SK-N-SH (cell line): ENCODE measurements at regions of chr15 and their contacts with region 1.

Region 1: GRCh38 chr15:42084460-42085235 is 9.7 kb downstream of the PLA2G4D start:
- DNase-seq: peak; percentile 89
- H3K4me3 ChIP-seq: peak overlapping the region in 1 of 2 experiments; percentile 49; a peak in 1 of 4 replicates
- H3K27ac ChIP-seq: no peak overlapping the region
- H3K4me1 ChIP-seq: peaks cover 0 to 2% of the 10 kb centered on the region in 2 experiments; a peak in 1 of 4 replicates
- H3K27me3 ChIP-seq: peaks cover 4% of the 10 kb centered on the region; the same call in 1 of the 2 replicates
- CTCF ChIP-seq: peak; percentile 88
- EP300 ChIP-seq: no peak
- RAD21 ChIP-seq: peak; percentile 78

Region 2: DNA sequence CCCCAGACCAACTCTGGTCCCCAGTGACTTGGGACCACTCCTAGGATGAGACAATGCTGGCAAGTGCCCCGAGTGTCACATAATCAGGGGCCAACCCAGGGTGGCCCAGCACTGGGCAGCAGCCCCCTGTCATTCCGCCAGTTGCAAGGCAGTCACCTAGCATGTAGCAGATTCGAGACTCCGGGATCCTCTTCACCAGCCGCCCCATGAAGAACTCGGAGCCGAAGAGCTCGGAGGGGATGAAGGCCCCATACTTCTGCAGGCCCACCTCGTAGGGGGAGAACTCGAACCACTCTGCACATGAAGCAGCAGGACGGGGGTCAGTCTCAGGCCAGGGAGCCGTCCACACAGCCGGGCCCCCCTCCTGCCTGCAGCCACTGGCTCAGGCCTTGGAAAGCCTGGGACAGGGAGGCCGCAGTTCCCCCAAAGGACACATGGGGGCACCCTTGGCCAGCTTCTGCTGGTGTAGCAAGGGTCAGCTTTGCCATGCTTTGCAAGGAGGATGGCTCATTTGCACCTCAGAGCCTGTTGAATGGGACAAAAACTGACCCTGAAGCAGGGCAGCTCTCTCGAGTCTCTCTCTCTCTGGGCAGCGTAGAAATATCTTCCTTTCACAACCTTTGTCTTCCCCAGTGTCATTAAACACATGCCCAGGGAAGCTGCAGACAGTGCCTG is 95.3 kb before region 1 on chr15:
- CTCF ChIA-PET with region 1: interaction called, 172 read pairs
- POLR2A ChIA-PET with region 1: no interaction called
- DNase-seq: peak; percentile 92
- H3K4me3 ChIP-seq: peak overlapping the region in 1 of 2 experiments; percentile 26; a peak in 1 of 4 replicates
- H3K27ac ChIP-seq: no peak overlapping the region
- H3K4me1 ChIP-seq: no peaks in the 10 kb centered on the region; a peak in 1 of 4 replicates
- H3K27me3 ChIP-seq: no peaks in the 10 kb centered on the region
- CTCF ChIP-seq: peak; percentile 92
- EP300 ChIP-seq: no peak
- RAD21 ChIP-seq: peak; percentile 98

Region 3: GRCh38 chr15:42056934-42057779 is 27.5 kb before region 1 on chr15:
- CTCF ChIA-PET with region 1: interaction called, 293 read pairs
- POLR2A ChIA-PET with region 1: no interaction called
- DNase-seq: peak; percentile 90
- H3K4me3 ChIP-seq: peak overlapping the region; percentile 30 to 47
- H3K27ac ChIP-seq: no peak overlapping the region
- H3K4me1 ChIP-seq: peaks cover 0 to 8% of the 10 kb centered on the region in 2 experiments; a peak in 2 of 4 replicates
- H3K27me3 ChIP-seq: peaks cover 11% of the 10 kb centered on the region; the same call in 1 of the 2 replicates
- CTCF ChIP-seq: peak; percentile 63
- EP300 ChIP-seq: no peak
- RAD21 ChIP-seq: peak; percentile 72

Region 4: DNA sequence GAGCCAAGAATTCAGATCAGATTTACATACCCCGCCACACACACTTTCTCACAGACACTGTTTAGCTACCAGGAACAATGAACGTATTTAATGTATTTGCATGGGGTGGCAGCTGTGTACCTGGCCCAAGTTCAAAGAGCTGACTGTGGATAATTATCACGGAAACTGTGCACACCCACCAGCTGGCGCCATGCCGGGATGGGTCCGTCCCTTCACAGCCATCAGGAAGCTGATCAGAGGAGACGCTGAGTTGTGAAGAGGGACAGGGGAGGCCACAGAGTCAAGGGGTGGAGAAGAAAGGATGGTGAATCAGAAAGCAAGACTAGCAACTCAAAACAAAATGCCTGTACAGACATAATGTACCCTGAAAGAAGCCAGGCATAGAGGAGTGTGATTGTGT is 22.8 kb after region 1 on chr15:
- CTCF ChIA-PET with region 1: interaction called, 16 read pairs
- POLR2A ChIA-PET with region 1: no interaction called
- DNase-seq: no peak
- H3K4me3 ChIP-seq: no peak overlapping the region
- H3K27ac ChIP-seq: no peak overlapping the region
- H3K4me1 ChIP-seq: peaks cover 0 to 4% of the 10 kb centered on the region in 2 experiments; a peak in 1 of 4 replicates
- H3K27me3 ChIP-seq: no peaks in the 10 kb centered on the region; the same call in 1 of the 2 replicates
- CTCF ChIP-seq: no peak
- EP300 ChIP-seq: no peak
- RAD21 ChIP-seq: no peak

Region 5: DNA sequence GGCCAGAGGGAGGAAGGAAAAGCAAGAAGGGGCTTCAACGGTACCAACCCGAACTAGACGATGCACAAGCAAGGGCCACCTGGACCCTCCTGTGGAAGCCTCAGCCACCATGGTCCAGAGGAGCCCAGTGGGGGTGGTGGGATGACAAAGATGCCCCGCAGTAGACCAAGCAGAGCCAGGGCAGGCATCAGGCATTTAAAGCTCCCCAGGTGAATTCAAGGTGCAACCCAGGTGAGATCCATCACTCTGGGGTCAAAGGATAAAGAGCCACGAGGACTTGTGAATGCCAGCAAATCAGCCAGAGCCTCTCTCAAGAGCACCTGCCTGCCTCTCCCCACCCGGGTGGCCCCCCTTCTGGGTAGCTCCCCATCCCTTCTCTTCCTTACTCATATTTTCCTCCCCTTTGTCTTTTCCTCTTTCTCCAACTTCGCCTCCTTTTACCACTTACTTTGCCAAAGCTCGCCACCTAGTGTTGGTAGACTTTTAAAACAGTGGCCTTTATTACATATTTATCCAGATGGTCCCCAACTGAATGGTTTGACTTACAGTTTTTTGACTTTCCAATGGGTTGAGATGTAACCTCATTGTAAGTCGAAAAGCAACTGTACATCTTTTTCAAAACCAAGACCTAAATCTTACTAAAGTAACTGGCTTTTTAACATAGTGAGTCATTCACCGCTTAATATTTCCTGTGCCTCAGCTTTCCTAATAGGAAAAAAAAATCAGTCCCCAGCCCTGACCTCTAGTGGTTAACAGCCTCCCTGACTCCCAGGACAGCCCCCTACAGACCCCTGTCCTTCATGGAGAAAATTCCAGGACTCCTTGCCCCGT is 53.0 kb after region 1 on chr15:
- CTCF ChIA-PET with region 1: interaction called, 16 read pairs
- POLR2A ChIA-PET with region 1: no interaction called
- DNase-seq: peak; percentile 64
- H3K4me3 ChIP-seq: peak overlapping the region in 1 of 2 experiments; percentile 27; a peak in 1 of 4 replicates
- H3K27ac ChIP-seq: no peak overlapping the region
- H3K4me1 ChIP-seq: no peaks in the 10 kb centered on the region
- H3K27me3 ChIP-seq: no peaks in the 10 kb centered on the region; the same call in 1 of the 2 replicates
- CTCF ChIP-seq: peak; percentile 76
- EP300 ChIP-seq: no peak
- RAD21 ChIP-seq: peak; percentile 78

Region 6: GRCh38 chr15:42157981-42158765 is 73.5 kb after region 1 on chr15:
- CTCF ChIA-PET with region 1: no interaction called
- POLR2A ChIA-PET with region 1: no interaction called
- DNase-seq: no peak
- H3K4me3 ChIP-seq: no peak overlapping the region
- H3K27ac ChIP-seq: peak overlapping the region; percentile 18 to 64; a peak in 3 of 4 replicates
- H3K4me1 ChIP-seq: peaks cover 9 to 14% of the 10 kb centered on the region in 2 experiments; a peak in 1 of 4 replicates
- H3K27me3 ChIP-seq: no peaks in the 10 kb centered on the region
- CTCF ChIP-seq: no peak
- EP300 ChIP-seq: no peak; a peak in 1 of 4 replicates
- RAD21 ChIP-seq: no peak

Region 7: DNA sequence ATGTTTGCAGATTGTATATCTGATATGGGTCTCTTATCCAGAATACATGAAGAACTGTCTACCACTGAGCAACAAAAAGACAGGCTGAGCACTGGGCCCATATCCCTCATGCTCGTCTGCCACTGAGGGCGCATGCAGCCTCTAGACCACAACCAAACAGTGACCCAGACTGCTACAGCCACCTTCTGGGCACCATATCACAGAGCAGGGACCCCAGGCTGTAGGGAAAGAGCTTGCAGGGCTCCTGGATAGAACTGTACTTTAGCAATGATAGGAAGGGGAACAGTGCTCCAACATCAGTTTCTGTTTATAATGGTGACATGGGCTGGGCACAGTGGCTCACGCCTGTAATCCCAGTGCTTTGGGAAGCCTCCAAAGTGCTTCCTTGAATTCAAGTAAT is 228.8 kb after region 1 on chr15:
- CTCF ChIA-PET with region 1: no interaction called
- POLR2A ChIA-PET with region 1: no interaction called
- DNase-seq: no peak
- H3K4me3 ChIP-seq: no peak overlapping the region
- H3K27ac ChIP-seq: no peak overlapping the region
- H3K4me1 ChIP-seq: no peaks in the 10 kb centered on the region
- H3K27me3 ChIP-seq: no peaks in the 10 kb centered on the region
- CTCF ChIP-seq: no peak
- EP300 ChIP-seq: no peak
- RAD21 ChIP-seq: no peak